SK-N-SH (cell line): ENCODE measurements at regions of chr2 and their contacts with region 1.

Region 1: GRCh38 chr2:85132834-85133637 is at the start of gene TCF7L1:
- DNase-seq: peak; percentile 93
- H3K4me3 ChIP-seq: peak within 1 kb of the TSS; percentile 66 to 90
- H3K27ac ChIP-seq: no peak within 1 kb of the TSS; a peak in 1 of 4 replicates
- H3K4me1 ChIP-seq: peaks cover 0 to 18% of the 10 kb centered on the region in 2 experiments; a peak in 2 of 4 replicates
- H3K27me3 ChIP-seq: no peaks in the 10 kb centered on the region
- CTCF ChIP-seq: peak; percentile 88
- EP300 ChIP-seq: no peak
- RAD21 ChIP-seq: peak; percentile 75
- polyA plus RNA-seq, gene TCF7L1: 1.6 and 3.7 TPM in 2 replicates

Region 2: GRCh38 chr2:85143463-85144082 is 10.5 kb after region 1 on chr2:
- CTCF ChIA-PET with region 1: interaction called, 20 read pairs
- POLR2A ChIA-PET with region 1: no interaction called
- DNase-seq: no peak
- H3K4me3 ChIP-seq: no peak overlapping the region
- H3K27ac ChIP-seq: no peak overlapping the region
- H3K4me1 ChIP-seq: no peaks in the 10 kb centered on the region; a peak in 1 of 4 replicates
- H3K27me3 ChIP-seq: no peaks in the 10 kb centered on the region
- CTCF ChIP-seq: no peak
- EP300 ChIP-seq: no peak
- RAD21 ChIP-seq: no peak

Region 3: DNA sequence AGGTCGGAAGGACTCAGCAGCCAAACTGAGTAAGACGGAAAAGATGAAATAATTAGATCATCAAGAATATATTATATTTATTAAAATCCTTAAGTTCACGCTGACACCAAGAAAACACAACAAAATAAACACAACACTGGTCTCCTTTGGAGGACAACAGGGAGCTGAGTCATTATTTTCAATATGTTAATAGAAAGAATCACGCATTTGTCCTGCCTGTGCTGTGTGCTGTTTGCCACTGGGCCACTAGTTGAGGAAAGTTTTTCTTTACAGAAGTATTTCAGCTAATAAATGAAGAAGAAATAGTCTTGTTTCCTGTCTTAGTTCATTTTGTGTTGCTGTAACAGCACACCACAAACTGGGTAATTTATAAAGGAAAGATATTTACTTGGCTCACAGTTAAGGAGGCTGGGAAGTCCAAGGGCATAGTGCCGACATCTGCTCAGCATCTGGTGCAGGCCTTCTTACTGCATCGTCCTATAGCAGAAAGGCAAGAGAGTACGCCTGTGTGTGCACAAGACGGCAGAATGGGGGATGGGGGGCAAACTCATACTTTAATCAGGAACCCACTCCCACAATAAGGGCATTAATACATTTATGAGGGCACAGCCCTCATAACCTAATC is 88.1 kb after region 1 on chr2:
- CTCF ChIA-PET with region 1: interaction called, 10 read pairs
- POLR2A ChIA-PET with region 1: no interaction called
- DNase-seq: no peak
- H3K4me3 ChIP-seq: no peak overlapping the region
- H3K27ac ChIP-seq: no peak overlapping the region
- H3K4me1 ChIP-seq: peaks cover 10 to 13% of the 10 kb centered on the region in 2 experiments; a peak in 3 of 4 replicates
- H3K27me3 ChIP-seq: no peaks in the 10 kb centered on the region
- CTCF ChIP-seq: no peak
- EP300 ChIP-seq: no peak
- RAD21 ChIP-seq: no peak

Region 4: GRCh38 chr2:85273738-85274731 is 141.0 kb after region 1 on chr2:
- CTCF ChIA-PET with region 1: interaction called, 11 read pairs
- POLR2A ChIA-PET with region 1: no interaction called
- DNase-seq: peak; percentile 66
- H3K4me3 ChIP-seq: no peak overlapping the region; a peak in 1 of 4 replicates
- H3K27ac ChIP-seq: no peak overlapping the region
- H3K4me1 ChIP-seq: peaks cover 21 to 39% of the 10 kb centered on the region in 2 experiments
- H3K27me3 ChIP-seq: no peaks in the 10 kb centered on the region
- CTCF ChIP-seq: no peak
- EP300 ChIP-seq: no peak
- RAD21 ChIP-seq: no peak

Region 5: DNA sequence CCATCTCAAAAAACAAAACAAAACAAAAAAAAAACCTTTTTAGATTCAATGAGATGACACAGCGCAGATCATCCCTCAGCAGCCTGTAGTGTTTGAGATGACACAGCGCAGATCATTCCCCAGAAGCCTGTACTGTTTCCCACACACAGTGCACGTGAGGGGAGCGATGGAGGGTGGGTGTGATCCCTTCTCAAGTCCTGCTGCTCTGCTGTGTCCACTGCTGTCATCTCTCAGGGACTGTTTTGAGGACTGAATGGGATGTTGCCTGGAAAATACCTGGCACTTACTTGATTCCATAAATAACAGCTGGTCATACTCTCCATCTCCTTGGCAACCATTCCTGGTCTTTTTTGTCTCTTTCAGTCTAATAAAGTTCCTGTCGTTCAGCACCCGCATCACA is 169.1 kb after region 1 on chr2:
- CTCF ChIA-PET with region 1: interaction called, 17 read pairs
- POLR2A ChIA-PET with region 1: no interaction called
- DNase-seq: no peak
- H3K4me3 ChIP-seq: no peak overlapping the region
- H3K27ac ChIP-seq: no peak overlapping the region
- H3K4me1 ChIP-seq: peaks cover 0 to 2% of the 10 kb centered on the region in 2 experiments; a peak in 2 of 4 replicates
- H3K27me3 ChIP-seq: no peaks in the 10 kb centered on the region
- CTCF ChIP-seq: no peak
- EP300 ChIP-seq: no peak
- RAD21 ChIP-seq: no peak

Region 6: DNA sequence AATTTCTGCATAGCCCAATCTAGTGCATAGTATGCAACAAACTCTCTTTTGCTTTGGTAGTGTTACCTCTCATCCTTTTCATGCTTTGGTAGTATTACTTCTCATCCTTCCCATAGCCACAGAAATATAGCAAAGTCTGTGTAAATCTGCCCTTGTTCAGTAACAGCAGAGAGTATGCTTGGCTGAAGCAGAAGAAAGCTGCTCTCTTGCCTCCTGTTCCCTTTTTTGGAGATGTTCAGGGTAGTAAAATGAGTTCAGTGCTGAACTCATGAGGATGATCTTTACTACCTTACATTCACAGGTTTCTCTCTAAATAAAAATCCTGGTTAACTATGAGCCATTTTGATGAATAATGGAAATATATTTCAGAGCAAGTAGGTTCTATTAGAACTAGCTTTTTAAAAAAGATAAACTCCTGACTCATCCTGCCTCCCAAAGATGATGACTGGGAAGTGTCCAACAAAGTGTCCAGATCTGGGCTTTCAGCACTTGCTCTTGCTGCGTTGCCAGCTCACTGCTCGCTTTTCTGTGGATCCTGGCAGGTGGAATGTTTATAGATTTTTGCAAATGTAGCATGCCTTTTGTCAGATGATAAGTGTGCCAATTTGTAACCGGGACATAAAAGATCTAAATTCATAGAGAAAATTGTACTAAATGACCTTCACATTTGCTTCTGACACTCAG is 1459.7 kb after region 1 on chr2:
- CTCF ChIA-PET with region 1: no interaction called
- POLR2A ChIA-PET with region 1: no interaction called
- DNase-seq: no peak
- H3K4me3 ChIP-seq: no peak overlapping the region
- H3K27ac ChIP-seq: no peak overlapping the region
- H3K4me1 ChIP-seq: no peaks in the 10 kb centered on the region
- H3K27me3 ChIP-seq: no peaks in the 10 kb centered on the region
- CTCF ChIP-seq: no peak
- EP300 ChIP-seq: no peak
- RAD21 ChIP-seq: no peak